ENCODE measurements at regions of chr15 and their contacts with region 1.

Region 1: DNA sequence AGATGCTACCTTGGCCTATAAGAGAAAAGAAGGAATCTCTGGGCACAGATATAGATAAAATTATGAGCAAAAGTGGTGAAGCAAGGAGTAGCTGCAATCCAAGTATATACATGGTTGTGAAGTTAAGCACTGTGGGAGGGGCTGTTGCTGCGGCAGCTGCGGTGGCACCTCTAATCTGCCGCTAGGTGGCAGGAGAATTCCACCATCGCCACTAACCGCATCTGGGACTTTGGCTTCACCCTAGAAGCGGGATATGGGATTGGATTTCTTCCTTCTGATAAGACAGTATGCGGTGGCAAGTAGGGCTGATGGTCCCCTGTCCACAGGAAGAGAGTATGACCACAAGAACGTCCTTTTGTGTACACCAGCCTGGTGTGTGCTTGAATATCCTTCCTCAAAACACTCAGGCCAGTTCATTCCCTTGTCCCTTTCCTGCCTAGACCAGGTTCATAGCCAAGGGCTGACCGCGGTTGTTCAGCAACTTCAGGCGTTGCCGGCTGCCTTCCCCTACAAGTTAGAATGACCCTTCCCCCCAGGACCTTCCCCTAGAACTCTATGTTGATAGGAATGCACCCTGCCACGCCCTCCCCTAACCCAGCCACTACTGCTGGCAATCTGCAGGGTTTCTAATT is 5.1 kb downstream of the MAGEL2 start:
- DNase-seq: peak; percentile 71 to 79 (median 76)
- ATAC-seq: peak; percentile 93
- H3K4me3 ChIP-seq: no peak overlapping the region
- H3K27ac ChIP-seq: no peak overlapping the region
- H3K4me1 ChIP-seq: peaks cover 0 to 15% of the 10 kb centered on the region in 2 experiments; a peak in 2 of 5 replicates
- H3K27me3 ChIP-seq: peaks cover 3 to 26% of the 10 kb centered on the region in 2 experiments; a peak in 4 of 5 replicates
- CTCF ChIP-seq: peak; percentile 86 to 95 (median 88)
- EP300 ChIP-seq: no peak
- POLR2A ChIP-seq: no peak
- RAD21 ChIP-seq: peak; percentile 73 to 91

Region 2: DNA sequence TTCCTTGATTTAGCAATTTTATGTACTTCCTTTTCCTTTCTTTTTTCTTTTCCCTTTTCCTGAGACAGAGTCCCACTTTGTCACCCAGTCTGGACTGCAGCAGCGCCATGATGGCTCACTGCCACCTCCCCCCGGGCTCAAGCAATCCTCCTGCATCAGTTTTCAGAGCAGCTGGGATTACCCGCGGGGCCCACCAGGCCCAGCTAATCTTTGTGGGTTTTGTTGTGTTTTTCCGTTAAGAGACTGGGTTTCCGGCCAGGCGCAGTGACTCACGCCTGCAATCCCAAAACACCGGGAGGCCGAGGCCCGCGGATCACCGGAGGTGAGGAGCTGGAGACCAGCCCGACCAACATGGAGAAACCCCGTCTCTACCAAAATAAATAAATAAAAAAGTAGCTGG is 270.2 kb before region 1 on chr15:
- CTCF ChIA-PET with region 1: no interaction called
- POLR2A ChIA-PET with region 1: no interaction called
- in situ Hi-C with region 1: no loop called
- intact Hi-C with region 1: no loop called
- DNase-seq: peak in 2 of 4 experiments; percentile 16 to 27
- ATAC-seq: peak; percentile 43; the same call in 2 of the 3 replicates
- H3K4me3 ChIP-seq: no peak overlapping the region
- H3K27ac ChIP-seq: no peak overlapping the region
- H3K4me1 ChIP-seq: peaks cover 0 to 9% of the 10 kb centered on the region in 2 experiments; a peak in 1 of 5 replicates
- H3K27me3 ChIP-seq: no peaks in the 10 kb centered on the region; a peak in 1 of 5 replicates
- CTCF ChIP-seq: no peak
- EP300 ChIP-seq: no peak
- POLR2A ChIP-seq: no peak
- RAD21 ChIP-seq: no peak

Region 3: GRCh38 chr15:23857028-23857641 is 214.6 kb after region 1 on chr15:
- CTCF ChIA-PET with region 1: interaction called, 4 read pairs
- POLR2A ChIA-PET with region 1: interaction called, 3 read pairs
- in situ Hi-C with region 1: loop called (anchors 10 kb)
- intact Hi-C with region 1: loop called (anchors 2 kb)
- DNase-seq: peak; percentile 11 to 52 (median 16)
- ATAC-seq: peak; percentile 81
- H3K4me3 ChIP-seq: no peak overlapping the region
- H3K27ac ChIP-seq: no peak overlapping the region
- H3K4me1 ChIP-seq: no peaks in the 10 kb centered on the region
- H3K27me3 ChIP-seq: no peaks in the 10 kb centered on the region; a peak in 1 of 5 replicates
- CTCF ChIP-seq: peak; percentile 47 to 62 (median 52); a peak in 5 of 6 replicates
- EP300 ChIP-seq: no peak
- POLR2A ChIP-seq: no peak
- RAD21 ChIP-seq: peak; percentile 31 to 40; a peak in 3 of 4 replicates

Region 4: GRCh38 chr15:23866832-23867231 is 224.3 kb after region 1 on chr15:
- CTCF ChIA-PET with region 1: interaction called, 7 read pairs
- POLR2A ChIA-PET with region 1: no interaction called
- in situ Hi-C with region 1: loop called (anchors 10 kb)
- intact Hi-C with region 1: no loop called
- DNase-seq: peak in 1 of 4 experiments; percentile 34
- ATAC-seq: no peak
- H3K4me3 ChIP-seq: no peak overlapping the region
- H3K27ac ChIP-seq: no peak overlapping the region
- H3K4me1 ChIP-seq: peaks cover 0 to 5% of the 10 kb centered on the region in 2 experiments; a peak in 1 of 5 replicates
- H3K27me3 ChIP-seq: no peaks in the 10 kb centered on the region
- CTCF ChIP-seq: peak; percentile 15 to 45 (median 31); a peak in 3 of 6 replicates
- EP300 ChIP-seq: no peak
- POLR2A ChIP-seq: no peak
- RAD21 ChIP-seq: peak in 1 of 2 experiments; percentile 34; a peak in 1 of 4 replicates

Region 5: DNA sequence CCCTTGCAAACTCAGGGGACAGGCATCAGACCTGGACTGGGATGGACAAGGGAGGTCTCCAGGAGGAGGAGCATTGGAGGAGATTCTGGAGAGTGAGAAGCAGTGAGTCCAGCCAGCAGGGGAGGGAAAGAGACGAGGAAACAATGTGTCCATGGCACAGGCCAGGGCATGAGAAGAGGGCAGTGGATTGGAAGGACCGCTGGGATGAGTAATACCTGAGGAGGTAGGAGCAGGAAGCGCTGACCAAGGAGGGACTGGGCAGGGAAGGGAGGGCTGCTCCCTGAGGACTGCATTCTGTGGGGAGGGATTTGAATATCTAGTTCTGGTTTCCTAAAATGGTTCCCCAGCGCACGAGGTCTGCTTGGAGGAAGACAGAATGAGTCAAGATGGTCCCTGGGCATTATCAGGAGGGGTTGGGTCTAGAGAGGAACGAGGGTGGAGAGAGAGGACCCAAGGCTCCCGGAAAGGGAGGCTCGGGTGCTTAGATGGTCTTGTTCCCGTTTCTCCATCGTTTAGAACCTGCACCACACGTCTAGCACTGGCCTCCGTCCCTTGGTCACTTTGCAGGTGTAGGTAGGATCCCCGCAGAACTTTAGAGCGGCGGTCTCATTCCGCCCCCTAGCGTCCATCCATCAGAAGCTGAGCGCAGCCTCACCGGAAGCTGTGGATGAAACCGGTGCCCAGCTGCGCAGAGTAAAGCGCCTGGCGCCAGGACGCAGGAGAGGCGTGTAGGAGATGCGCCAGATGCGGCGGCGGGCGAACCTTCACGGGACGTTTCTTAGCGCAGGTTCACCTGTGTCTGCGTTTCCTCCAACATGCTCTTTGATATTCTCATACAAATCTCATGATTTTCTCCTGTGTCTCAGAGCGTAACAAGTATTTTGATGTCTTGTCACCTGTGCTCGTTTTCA is 235.2 kb after region 1 on chr15:
- CTCF ChIA-PET with region 1: interaction called, 7 read pairs
- POLR2A ChIA-PET with region 1: no interaction called
- in situ Hi-C with region 1: no loop called
- intact Hi-C with region 1: loop called (anchors 2 kb)
- DNase-seq: peak; percentile 41 to 71 (median 47)
- ATAC-seq: peak; percentile 98
- H3K4me3 ChIP-seq: no peak overlapping the region
- H3K27ac ChIP-seq: no peak overlapping the region
- H3K4me1 ChIP-seq: peaks cover 0 to 4% of the 10 kb centered on the region in 2 experiments; a peak in 2 of 5 replicates
- H3K27me3 ChIP-seq: no peaks in the 10 kb centered on the region
- CTCF ChIP-seq: peak; percentile 70 to 74 (median 74)
- EP300 ChIP-seq: no peak
- POLR2A ChIP-seq: no peak
- RAD21 ChIP-seq: peak; percentile 34 to 62

Region 6: GRCh38 chr15:25508369-25509002 is 1866.0 kb after region 1 on chr15:
- CTCF ChIA-PET with region 1: no interaction called
- POLR2A ChIA-PET with region 1: no interaction called
- in situ Hi-C with region 1: no loop called
- intact Hi-C with region 1: loop called (anchors 10 kb)
- DNase-seq: peak; percentile 52 to 55 (median 54)
- ATAC-seq: peak; percentile 70
- H3K4me3 ChIP-seq: no peak overlapping the region
- H3K27ac ChIP-seq: no peak overlapping the region
- H3K4me1 ChIP-seq: no peaks in the 10 kb centered on the region
- H3K27me3 ChIP-seq: no peaks in the 10 kb centered on the region
- CTCF ChIP-seq: peak; percentile 52 to 76 (median 67); a peak in 5 of 6 replicates
- EP300 ChIP-seq: no peak
- POLR2A ChIP-seq: no peak
- RAD21 ChIP-seq: peak; percentile 60 to 80